IMR-90 (cell line): ENCODE measurements at regions of chr11 and their contacts with region 1.

Region 1: GRCh38 chr11:111777094-111778046 is 11.2 kb upstream of the PPP2R1B start:
- DNase-seq: peak; percentile 82
- ATAC-seq: peak; percentile 96
- H3K4me3 ChIP-seq: no peak overlapping the region
- H3K27ac ChIP-seq: no peak overlapping the region
- H3K4me1 ChIP-seq: peaks cover 4% of the 10 kb centered on the region
- H3K27me3 ChIP-seq: no peaks in the 10 kb centered on the region
- CTCF ChIP-seq: peak; percentile 87
- POLR2A ChIP-seq: no peak
- RAD21 ChIP-seq: peak; percentile 91

Region 2: DNA sequence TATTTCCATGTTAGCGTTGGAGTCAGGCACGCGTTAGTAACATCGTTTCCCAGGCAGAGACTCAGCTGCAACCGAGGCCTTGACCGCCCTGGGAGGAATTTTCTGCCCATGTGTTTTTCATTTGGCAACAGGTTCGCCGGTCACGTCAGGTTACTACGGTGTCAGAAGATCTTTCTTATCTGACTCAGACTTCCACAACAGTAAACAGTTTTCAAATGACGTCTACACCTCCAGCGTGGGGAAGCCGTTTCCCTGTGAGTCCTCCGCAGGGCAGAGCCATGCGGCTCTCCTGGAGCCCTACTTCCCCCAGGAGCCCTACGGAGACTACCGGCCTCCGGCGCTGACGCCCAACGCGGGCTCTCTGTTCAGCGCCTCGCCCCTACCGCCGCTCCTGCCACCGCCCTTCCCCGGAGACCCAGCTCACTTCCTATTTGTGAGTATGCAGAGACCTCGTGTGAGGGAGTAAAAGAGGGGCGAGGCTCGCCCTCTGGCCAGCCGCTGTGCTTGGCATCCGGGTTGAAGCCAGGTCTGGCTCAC is 493.4 kb before region 1 on chr11:
- CTCF ChIA-PET with region 1: no interaction called
- POLR2A ChIA-PET with region 1: no interaction called
- dilution Hi-C with region 1: no loop called
- in situ Hi-C with region 1: loop called (anchors 10 kb)
- intact Hi-C with region 1: no loop called
- DNase-seq: peak; percentile 51
- ATAC-seq: no peak
- H3K4me3 ChIP-seq: no peak overlapping the region
- H3K27ac ChIP-seq: no peak overlapping the region
- H3K4me1 ChIP-seq: no peaks in the 10 kb centered on the region
- H3K27me3 ChIP-seq: peaks cover 26% of the 10 kb centered on the region
- CTCF ChIP-seq: no peak
- POLR2A ChIP-seq: no peak
- RAD21 ChIP-seq: no peak

Region 3: DNA sequence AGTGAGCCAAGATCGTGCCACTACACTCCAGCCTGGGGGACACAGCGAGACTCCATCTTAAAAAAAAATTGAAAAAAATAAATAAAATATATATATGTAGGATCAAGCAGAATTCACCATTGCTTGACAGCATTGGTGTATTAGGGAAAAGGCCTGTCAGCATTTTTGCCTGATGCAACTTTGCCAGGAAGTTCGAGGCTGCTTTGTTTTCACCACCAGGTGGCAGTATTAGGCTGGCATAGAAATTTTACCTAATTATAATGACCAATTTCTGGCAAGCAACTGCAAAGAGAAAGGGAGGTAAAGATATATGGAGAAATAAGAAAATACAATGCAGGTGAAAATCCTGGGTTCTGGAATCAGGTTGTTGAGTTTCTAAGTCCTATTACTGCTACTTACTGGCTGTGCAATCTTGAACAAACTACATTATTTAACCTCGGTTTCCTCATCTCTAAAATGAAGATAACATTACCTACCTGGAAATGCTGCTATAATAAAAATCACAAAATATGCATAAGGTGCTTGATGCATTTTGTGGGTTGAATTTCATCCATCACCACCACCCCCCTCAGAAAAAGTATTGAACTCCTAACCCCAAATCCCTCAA is 212.2 kb before region 1 on chr11:
- CTCF ChIA-PET with region 1: no interaction called
- POLR2A ChIA-PET with region 1: no interaction called
- dilution Hi-C with region 1: no loop called
- in situ Hi-C with region 1: no loop called
- intact Hi-C with region 1: loop called (anchors 1 kb)
- DNase-seq: peak; percentile 80
- ATAC-seq: peak; percentile 11; the same call in 1 of the 2 replicates
- H3K4me3 ChIP-seq: no peak overlapping the region
- H3K27ac ChIP-seq: no peak overlapping the region
- H3K4me1 ChIP-seq: peaks cover 23% of the 10 kb centered on the region
- H3K27me3 ChIP-seq: no peaks in the 10 kb centered on the region
- CTCF ChIP-seq: peak; percentile 92
- POLR2A ChIP-seq: peak; percentile 28; the same call in 1 of the 2 replicates
- RAD21 ChIP-seq: peak; percentile 89

Region 4: GRCh38 chr11:111694851-111695250 is 82.5 kb before region 1 on chr11:
- CTCF ChIA-PET with region 1: interaction called, 3 read pairs
- POLR2A ChIA-PET with region 1: no interaction called
- dilution Hi-C with region 1: no loop called
- in situ Hi-C with region 1: no loop called
- intact Hi-C with region 1: loop called (anchors 5 kb)
- DNase-seq: peak; percentile 99
- ATAC-seq: peak; percentile 78
- H3K4me3 ChIP-seq: no peak overlapping the region
- H3K27ac ChIP-seq: no peak overlapping the region
- H3K4me1 ChIP-seq: peaks cover 17% of the 10 kb centered on the region
- H3K27me3 ChIP-seq: no peaks in the 10 kb centered on the region
- CTCF ChIP-seq: no peak
- POLR2A ChIP-seq: no peak
- RAD21 ChIP-seq: no peak

Region 5: DNA sequence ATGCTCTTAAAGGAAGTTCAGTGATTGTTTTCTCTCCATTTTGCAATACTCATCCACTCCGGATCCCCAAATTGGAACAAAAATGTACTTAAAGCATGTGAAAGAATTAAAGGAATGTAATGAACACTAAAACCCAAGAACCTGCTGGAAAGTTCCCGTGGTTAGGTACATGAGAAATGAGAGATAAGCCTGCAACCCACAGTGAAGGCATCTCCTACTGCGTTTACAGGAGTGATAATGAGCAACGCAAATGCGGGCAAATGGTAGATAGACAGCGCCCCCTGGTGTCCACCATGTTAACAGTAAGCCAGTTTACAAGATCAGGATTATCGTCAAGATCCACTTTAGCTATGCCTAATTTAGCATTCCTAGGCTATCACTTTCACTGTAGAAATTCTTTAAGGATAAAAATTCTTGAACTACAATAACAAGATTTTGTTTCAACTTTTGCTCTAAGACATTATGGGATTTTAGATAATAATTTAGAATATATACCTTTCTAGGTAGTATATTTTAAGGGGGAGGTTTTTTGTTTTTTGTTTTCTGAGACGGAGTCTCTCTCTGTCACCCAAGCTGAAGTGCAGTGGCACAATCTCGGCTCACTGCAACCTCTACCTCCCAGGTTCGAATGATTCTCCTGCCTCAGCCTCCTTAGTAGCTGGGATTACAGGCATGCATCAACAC is 64.1 kb after region 1 on chr11:
- CTCF ChIA-PET with region 1: interaction called, 4 read pairs
- POLR2A ChIA-PET with region 1: no interaction called
- dilution Hi-C with region 1: no loop called
- in situ Hi-C with region 1: no loop called
- intact Hi-C with region 1: loop called (anchors 1 kb)
- DNase-seq: peak; percentile 88
- ATAC-seq: peak; percentile 92
- H3K4me3 ChIP-seq: no peak overlapping the region
- H3K27ac ChIP-seq: no peak overlapping the region
- H3K4me1 ChIP-seq: peaks cover 5% of the 10 kb centered on the region
- H3K27me3 ChIP-seq: no peaks in the 10 kb centered on the region
- CTCF ChIP-seq: peak; percentile 89
- POLR2A ChIP-seq: peak; percentile 37; the same call in 1 of the 2 replicates
- RAD21 ChIP-seq: peak; percentile 95

Region 6: DNA sequence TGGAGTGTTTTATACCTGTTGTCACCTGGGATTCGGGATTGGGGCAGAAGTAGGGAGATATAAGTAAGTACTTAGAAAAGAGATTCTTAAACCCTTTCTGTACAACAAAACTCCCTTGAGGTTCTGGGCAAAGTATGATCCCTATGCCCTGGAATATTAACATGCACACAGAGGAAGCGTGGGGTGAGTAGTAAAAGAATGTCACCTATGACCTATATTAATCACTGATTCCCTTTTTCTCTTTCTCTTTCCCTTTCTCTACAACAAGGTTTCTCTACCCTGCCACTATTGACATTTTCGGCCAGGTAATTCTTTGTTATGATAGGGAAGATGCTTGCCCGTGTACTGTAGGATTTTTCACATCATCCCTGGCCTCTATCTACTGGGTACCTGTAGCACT is 693.0 kb after region 1 on chr11:
- CTCF ChIA-PET with region 1: no interaction called
- POLR2A ChIA-PET with region 1: no interaction called
- dilution Hi-C with region 1: no loop called
- in situ Hi-C with region 1: no loop called
- intact Hi-C with region 1: no loop called
- DNase-seq: peak; percentile 4
- ATAC-seq: peak; percentile 46
- H3K4me3 ChIP-seq: no peak overlapping the region
- H3K27ac ChIP-seq: no peak overlapping the region
- H3K4me1 ChIP-seq: no peaks in the 10 kb centered on the region; the same call in 1 of the 2 replicates
- H3K27me3 ChIP-seq: peaks cover 15% of the 10 kb centered on the region
- CTCF ChIP-seq: no peak
- POLR2A ChIP-seq: no peak
- RAD21 ChIP-seq: no peak